ENCODE measurements at regions of chr11 and their contacts with region 1.

Region 1: GRCh38 chr11:59152312-59152951 is 9.8 kb downstream of the FAM111A start:
- DNase-seq: peak; percentile 58
- ATAC-seq: peak; percentile 97
- H3K4me3 Mint-ChIP-seq: peak overlapping the region; percentile 45
- H3K27ac Mint-ChIP-seq: peak overlapping the region; percentile 93
- H3K4me1 Mint-ChIP-seq: peaks cover 38% of the 10 kb centered on the region
- H3K27me3 Mint-ChIP-seq: no peaks in the 10 kb centered on the region

Region 2: DNA sequence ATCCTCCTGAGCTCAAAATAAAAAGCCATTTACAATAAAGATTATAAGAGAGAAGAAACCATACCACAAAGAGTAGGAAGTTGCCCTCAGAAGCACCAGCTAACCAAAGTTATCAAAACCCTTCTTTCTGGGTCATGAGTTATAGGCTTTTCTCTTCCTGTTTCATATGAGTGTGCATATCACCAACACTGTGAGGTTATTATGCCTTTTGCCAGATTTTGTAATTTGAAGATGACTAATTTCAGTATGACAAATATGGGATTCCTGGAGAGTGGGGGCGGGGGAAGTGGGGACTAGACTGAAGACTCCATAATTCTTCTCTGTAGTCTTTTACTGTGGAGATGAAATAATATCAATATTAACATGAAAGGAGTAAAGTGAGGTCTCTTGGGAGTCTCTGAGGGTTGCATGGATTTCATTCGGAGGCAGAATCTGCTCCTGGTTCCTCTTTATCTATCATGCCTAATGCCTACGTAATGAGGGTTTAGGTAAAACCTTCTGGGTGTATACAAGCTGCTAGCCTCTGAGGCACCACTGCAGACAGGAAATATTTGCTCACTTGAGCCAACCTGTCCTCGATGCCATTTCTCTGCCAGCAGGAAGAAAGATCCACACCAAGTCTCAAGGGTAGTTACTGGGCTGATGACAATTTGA is 578.9 kb before region 1 on chr11:
- CTCF ChIA-PET with region 1: no interaction called
- POLR2A ChIA-PET with region 1: no interaction called
- intact Hi-C with region 1: loop called in 1 of 2 experiments (anchors 1 kb)
- DNase-seq: peak; percentile 84
- ATAC-seq: peak; percentile 26
- H3K4me3 Mint-ChIP-seq: peak overlapping the region; percentile 89
- H3K27ac Mint-ChIP-seq: peak overlapping the region; percentile 96
- H3K4me1 Mint-ChIP-seq: peaks cover 51% of the 10 kb centered on the region
- H3K27me3 Mint-ChIP-seq: no peaks in the 10 kb centered on the region

Region 3: GRCh38 chr11:58796333-58796732 is 356.1 kb before region 1 on chr11:
- CTCF ChIA-PET with region 1: no interaction called
- POLR2A ChIA-PET with region 1: no interaction called
- intact Hi-C with region 1: no loop called
- DNase-seq: no peak
- ATAC-seq: no peak
- H3K4me3 Mint-ChIP-seq: no peak overlapping the region
- H3K27ac Mint-ChIP-seq: no peak overlapping the region
- H3K4me1 Mint-ChIP-seq: no peaks in the 10 kb centered on the region
- H3K27me3 Mint-ChIP-seq: peaks cover 20% of the 10 kb centered on the region

Region 4: GRCh38 chr11:59106363-59107336 is 45.8 kb before region 1 on chr11 and contains the start of gene FAM111B:
- CTCF ChIA-PET with region 1: interaction called, 9 read pairs
- POLR2A ChIA-PET with region 1: interaction called, 7 read pairs
- intact Hi-C with region 1: loop called (anchors 2 kb)
- DNase-seq: peak; percentile 86
- ATAC-seq: peak; percentile 87
- H3K4me3 Mint-ChIP-seq: peak within 1 kb of the TSS; percentile 79
- H3K27ac Mint-ChIP-seq: peak within 1 kb of the TSS; percentile 64
- H3K4me1 Mint-ChIP-seq: peaks cover 54% of the 10 kb centered on the region
- H3K27me3 Mint-ChIP-seq: peaks cover 23% of the 10 kb centered on the region
- total RNA-seq, gene FAM111B: 32.3 to 38.9 TPM

Region 5: GRCh38 chr11:59401262-59401552 is 248.8 kb after region 1 on chr11:
- CTCF ChIA-PET with region 1: no interaction called
- POLR2A ChIA-PET with region 1: no interaction called
- intact Hi-C with region 1: no loop called
- DNase-seq: no peak
- ATAC-seq: no peak
- H3K4me3 Mint-ChIP-seq: no peak overlapping the region
- H3K27ac Mint-ChIP-seq: no peak overlapping the region
- H3K4me1 Mint-ChIP-seq: no peaks in the 10 kb centered on the region
- H3K27me3 Mint-ChIP-seq: peaks cover 4% of the 10 kb centered on the region

Region 6: DNA sequence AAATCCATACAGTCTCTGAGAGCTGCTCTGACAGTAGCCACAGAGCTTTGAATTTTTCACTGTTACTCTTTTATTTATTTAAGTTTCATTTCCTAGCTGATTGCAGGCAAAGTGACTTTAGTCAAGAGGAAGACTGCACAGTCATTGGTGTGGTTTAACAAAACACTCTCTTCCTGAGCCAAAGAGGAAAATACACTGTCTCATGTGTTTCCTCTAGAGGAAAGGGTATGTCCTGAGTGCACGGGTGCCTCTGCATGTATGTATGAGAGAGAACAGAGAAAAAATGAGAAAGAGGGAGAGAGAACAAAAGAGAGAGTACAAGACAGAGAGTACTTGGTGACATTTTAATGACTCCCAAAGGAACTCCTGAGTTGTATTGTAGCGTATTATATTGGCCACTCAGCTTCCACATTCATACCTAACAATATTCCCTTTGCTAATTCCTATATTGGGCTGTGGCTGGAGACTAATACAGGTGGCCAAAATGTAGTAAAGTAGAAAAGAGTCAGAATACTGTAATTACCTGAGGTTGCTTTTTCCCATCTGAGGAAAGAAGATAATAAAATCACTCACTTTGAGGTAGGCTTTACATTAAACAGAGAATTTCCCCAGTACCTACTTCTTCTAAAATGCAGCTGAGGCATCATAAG is 358.6 kb after region 1 on chr11 and contains the start of gene OR4D9:
- CTCF ChIA-PET with region 1: no interaction called
- POLR2A ChIA-PET with region 1: interaction called, 12 read pairs
- intact Hi-C with region 1: no loop called
- DNase-seq: peak; percentile 15
- ATAC-seq: peak; percentile 74
- H3K4me3 Mint-ChIP-seq: no peak within 1 kb of the TSS
- H3K27ac Mint-ChIP-seq: no peak within 1 kb of the TSS
- H3K4me1 Mint-ChIP-seq: peaks cover 26% of the 10 kb centered on the region
- H3K27me3 Mint-ChIP-seq: no peaks in the 10 kb centered on the region
- total RNA-seq, gene OR4D9: not detected